ENCODE measurements at regions of chr2 and their contacts with region 1.

Region 1: DNA sequence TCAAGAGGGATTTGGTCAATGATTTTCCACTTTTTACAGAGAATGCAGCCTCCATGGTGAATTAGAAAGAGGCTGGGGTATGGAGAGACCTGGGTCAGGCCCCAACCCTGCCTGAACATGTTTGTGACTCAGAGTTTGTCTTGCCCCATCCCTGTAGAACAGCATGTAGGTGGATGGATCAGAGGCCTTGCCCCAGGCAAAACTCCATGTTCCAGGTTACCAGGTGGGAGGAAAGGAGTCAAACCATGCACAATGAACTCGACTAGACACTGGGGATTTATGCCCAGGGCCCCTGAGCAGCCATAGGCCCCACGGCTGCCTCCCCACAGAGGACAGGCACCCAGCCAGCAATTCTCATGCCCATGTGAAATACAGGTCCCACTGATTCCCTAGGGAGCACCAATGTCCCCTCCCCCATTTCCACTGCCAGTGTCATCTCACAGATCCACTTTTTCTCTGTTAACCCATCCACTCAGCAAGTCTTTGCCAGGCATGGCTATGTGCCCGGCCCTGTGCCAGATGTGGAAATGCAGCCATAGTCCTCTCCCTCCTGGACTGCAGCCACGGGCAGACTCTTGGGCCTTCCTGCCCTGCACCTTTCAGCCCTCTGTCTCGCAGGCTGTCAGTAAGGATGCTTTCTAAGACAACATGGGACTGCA is 737.8 kb upstream of the HS6ST1 start:
- DNase-seq: peak; percentile 98
- H3K4me3 ChIP-seq: no peak overlapping the region
- H3K27ac ChIP-seq: peak overlapping the region; percentile 64
- H3K4me1 ChIP-seq: peaks cover 45% of the 10 kb centered on the region
- H3K27me3 ChIP-seq: no peaks in the 10 kb centered on the region
- CTCF ChIP-seq: no peak

Region 2: GRCh38 chr2:128808462-128809258 is 247.8 kb before region 1 on chr2:
- CTCF ChIA-PET with region 1: no interaction called
- dilution Hi-C with region 1: no loop called
- in situ Hi-C with region 1: no loop called
- intact Hi-C with region 1: loop called (anchors 10 kb)
- DNase-seq: peak; percentile 90
- H3K4me3 ChIP-seq: no peak overlapping the region
- H3K27ac ChIP-seq: peak overlapping the region; percentile 77
- H3K4me1 ChIP-seq: peaks cover 27% of the 10 kb centered on the region
- H3K27me3 ChIP-seq: no peaks in the 10 kb centered on the region
- CTCF ChIP-seq: no peak

Region 3: DNA sequence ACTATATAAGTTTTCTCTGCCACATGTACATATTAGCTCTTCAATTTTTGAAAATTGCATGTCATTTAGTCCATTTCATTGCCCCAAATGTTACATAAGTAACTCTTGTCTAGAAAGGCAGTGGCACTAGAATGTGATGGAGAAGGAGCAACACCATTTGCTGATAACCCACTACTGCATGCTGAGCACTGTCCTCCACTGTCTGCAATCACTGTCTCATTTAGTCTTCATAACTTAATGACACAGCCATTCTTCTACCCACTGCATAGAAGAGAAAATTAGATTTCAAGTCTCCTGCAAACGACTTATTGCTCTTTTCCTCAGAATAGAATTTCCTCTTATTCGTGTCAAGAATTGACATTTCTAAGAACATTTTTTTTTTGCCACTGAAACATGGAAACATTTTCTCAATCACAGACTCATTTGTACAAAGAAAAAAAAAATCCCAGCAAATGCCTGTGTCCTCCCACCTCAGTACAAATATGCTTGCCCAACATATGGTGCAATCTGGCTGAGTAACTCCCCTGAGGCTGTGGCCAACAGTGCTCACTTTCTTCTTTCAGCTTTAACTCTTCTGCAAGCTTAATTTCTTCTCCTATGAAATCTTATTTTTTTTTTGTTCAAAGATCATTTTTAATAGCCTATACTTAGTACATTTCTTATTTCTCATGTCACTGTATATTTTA is 30.9 kb after region 1 on chr2:
- CTCF ChIA-PET with region 1: no interaction called
- dilution Hi-C with region 1: no loop called
- in situ Hi-C with region 1: no loop called
- intact Hi-C with region 1: loop called (anchors 2 kb)
- DNase-seq: peak; percentile 90
- H3K4me3 ChIP-seq: no peak overlapping the region
- H3K27ac ChIP-seq: no peak overlapping the region
- H3K4me1 ChIP-seq: peaks cover 5% of the 10 kb centered on the region
- H3K27me3 ChIP-seq: no peaks in the 10 kb centered on the region
- CTCF ChIP-seq: no peak